Left lung (tissue), 14 donors: ENCODE measurements at regions of chr21 and their contacts with region 1.

Region 1: DNA sequence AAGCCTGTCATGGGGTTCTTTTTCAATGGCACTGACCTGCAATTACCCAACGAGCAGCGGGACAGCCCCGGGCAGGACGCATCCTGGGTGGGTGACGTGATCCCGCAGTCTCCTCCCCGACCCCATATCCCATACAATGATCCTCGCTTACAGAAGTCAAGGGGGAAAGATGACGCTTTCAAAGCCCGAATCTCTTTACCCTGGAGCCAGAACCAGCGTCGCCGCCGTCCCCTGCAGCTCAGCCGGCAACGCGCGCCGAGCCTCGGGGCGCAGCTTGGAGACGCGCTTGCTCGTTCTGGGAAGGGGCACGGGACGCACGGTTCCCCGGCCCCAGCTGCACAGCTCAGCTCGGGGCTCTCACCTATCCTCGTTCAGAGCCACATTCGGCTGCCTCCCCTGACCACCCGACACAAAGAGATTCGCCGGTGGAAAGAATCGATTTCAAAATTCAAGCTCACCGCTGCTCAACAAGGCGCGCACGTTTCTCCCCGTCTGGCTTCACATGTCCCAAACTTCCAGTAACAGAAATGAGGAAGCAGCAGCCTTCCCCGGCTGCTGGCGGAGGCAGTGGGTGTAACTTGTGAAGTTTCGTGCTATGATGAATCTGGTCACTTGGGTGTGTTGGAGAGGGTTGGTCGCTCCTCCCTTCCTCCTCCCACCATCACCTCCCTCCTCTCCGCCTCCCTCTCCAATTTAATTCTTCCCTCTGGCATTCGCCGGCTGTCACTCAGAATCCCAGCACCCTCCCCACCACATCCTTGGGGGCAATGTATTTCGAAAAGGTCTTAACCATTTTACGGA is at the start of gene TIAM1:
- DNase-seq: peak; percentile 59 to 84 (median 78)
- ATAC-seq: peak; percentile 83
- H3K4me3 ChIP-seq: peak within 1 kb of the TSS; percentile 34 to 37
- H3K27ac ChIP-seq: peak within 1 kb of the TSS in 1 of 2 donors; percentile 45
- H3K4me1 ChIP-seq: peaks cover 0 to 5% of the 10 kb centered on the region in 2 donors
- H3K27me3 ChIP-seq: peaks cover 22 to 61% of the 10 kb centered on the region in 2 donors
- CTCF ChIP-seq: no peak
- polyA plus RNA-seq, gene TIAM1: 43.9 to 65.5 (median 50.6) TPM

Region 2: DNA sequence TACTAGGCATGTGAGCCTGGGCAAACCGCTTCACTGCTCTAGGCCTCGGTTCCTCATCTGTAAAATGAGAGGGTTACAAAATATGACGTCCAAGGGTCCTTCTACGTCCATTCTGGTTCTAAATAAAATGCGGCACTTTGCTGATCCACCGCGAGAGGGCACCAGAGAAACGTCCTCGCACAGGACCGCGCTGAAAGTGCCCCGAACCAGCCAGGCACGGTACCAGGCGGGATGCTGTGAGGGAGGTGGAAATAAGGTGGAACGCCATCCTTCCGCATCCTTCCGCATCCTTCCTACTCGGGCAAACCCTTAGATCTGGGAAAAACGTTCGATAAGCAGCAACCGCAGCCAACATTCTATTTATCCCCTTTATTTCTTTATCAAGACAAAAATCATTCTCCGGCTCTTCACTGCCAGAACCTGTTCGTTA is 245.3 kb before region 1 on chr21:
- intact Hi-C with region 1: no loop called
- DNase-seq: peak; percentile 58 to 80 (median 66)
- ATAC-seq: peak; percentile 96
- H3K4me3 ChIP-seq: no peak overlapping the region
- H3K27ac ChIP-seq: no peak overlapping the region
- H3K4me1 ChIP-seq: no peaks in the 10 kb centered on the region
- H3K27me3 ChIP-seq: peaks cover 0 to 9% of the 10 kb centered on the region in 2 donors
- CTCF ChIP-seq: peak; percentile 62 to 78

Region 3: DNA sequence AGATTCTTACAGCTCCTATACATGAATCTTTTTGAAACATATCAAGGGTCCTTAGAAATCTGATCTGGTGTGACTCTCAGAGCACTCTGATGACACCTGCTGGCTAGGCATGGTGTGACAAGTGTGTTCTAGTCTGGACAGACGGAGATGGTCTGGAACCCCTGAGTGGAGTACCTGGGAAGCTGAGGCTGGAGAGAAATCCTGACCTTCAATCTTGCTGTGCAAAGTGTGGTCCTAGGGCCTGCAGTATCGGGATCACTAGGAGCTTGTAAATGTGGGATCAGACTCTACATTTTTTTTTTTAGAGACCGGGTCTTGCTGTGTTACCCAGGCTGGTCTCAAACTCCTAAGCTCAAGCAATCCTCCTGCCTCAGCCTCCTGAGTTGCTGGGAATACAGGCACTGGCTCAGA is 237.0 kb after region 1 on chr21:
- intact Hi-C with region 1: loop called in 1 of 2 experiments (anchors 10 kb)
- DNase-seq: peak in 3 of 4 donors; percentile 54 to 80 (median 61)
- ATAC-seq: peak; percentile 97
- H3K4me3 ChIP-seq: no peak overlapping the region
- H3K27ac ChIP-seq: no peak overlapping the region
- H3K4me1 ChIP-seq: no peaks in the 10 kb centered on the region
- H3K27me3 ChIP-seq: no peaks in the 10 kb centered on the region
- CTCF ChIP-seq: peak; percentile 65 to 72

Region 4: DNA sequence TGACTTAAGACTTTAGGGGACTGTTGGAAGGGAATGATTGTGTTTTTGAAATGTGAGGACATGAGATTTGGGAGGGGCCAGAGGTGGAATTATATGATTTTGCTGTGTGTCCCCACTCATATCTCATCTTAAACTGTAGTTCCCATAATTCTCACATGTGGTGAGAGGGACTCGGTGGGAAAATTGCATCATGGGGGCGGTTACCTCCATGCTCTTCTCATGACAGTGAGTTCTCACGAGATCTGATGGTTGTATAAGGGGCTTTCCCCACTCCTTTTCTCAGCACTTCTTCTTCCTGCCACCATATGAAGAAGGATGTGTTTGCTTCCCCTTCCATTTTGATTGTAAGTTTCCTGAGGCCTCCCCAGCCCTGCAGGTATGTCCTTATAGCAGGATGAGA is 423.0 kb after region 1 on chr21:
- intact Hi-C with region 1: no loop called
- DNase-seq: no peak
- ATAC-seq: no peak
- H3K4me3 ChIP-seq: no peak overlapping the region
- H3K27ac ChIP-seq: no peak overlapping the region
- H3K4me1 ChIP-seq: no peaks in the 10 kb centered on the region
- H3K27me3 ChIP-seq: no peaks in the 10 kb centered on the region
- CTCF ChIP-seq: no peak